ENCODE measurements at regions of chr14 and their contacts with region 1.

Region 1: GRCh38 chr14:105086833-105087307 is 21.6 kb upstream of the GPR132 start:
- DNase-seq: peak; percentile 89
- ATAC-seq: peak; percentile 86
- H3K4me3 ChIP-seq: peak overlapping the region in 4 of 5 experiments; percentile 55 to 67 (median 60)
- H3K4me3 Mint-ChIP-seq: peak overlapping the region; percentile 85
- H3K27ac ChIP-seq: peak overlapping the region in 1 of 2 donors; percentile 26
- H3K27ac Mint-ChIP-seq: peak overlapping the region; percentile 37
- H3K4me1 ChIP-seq: peaks cover 9 to 17% of the 10 kb centered on the region in 2 donors
- H3K4me1 Mint-ChIP-seq: peaks cover 16% of the 10 kb centered on the region
- H3K27me3 ChIP-seq: peaks cover 0 to 30% (median 9%) of the 10 kb centered on the region in 4 experiments
- H3K27me3 Mint-ChIP-seq: peaks cover 16% of the 10 kb centered on the region
- CTCF ChIP-seq: peak; percentile 78

Region 2: GRCh38 chr14:104895786-104896661 is 190.8 kb before region 1 on chr14:
- CTCF ChIA-PET with region 1: no interaction called
- POLR2A ChIA-PET with region 1: interaction called, 3 read pairs
- intact Hi-C with region 1: loop called (anchors 1 kb)
- DNase-seq: peak; percentile 18
- ATAC-seq: no peak
- H3K4me3 ChIP-seq: no peak overlapping the region
- H3K4me3 Mint-ChIP-seq: no peak overlapping the region
- H3K27ac ChIP-seq: no peak overlapping the region
- H3K27ac Mint-ChIP-seq: no peak overlapping the region
- H3K4me1 ChIP-seq: peaks cover 0 to 5% of the 10 kb centered on the region in 2 donors
- H3K4me1 Mint-ChIP-seq: peaks cover 4% of the 10 kb centered on the region
- H3K27me3 ChIP-seq: peaks cover 0 to 4% (median 0%) of the 10 kb centered on the region in 4 experiments
- H3K27me3 Mint-ChIP-seq: peaks cover 5% of the 10 kb centered on the region
- CTCF ChIP-seq: no peak

Region 3: DNA sequence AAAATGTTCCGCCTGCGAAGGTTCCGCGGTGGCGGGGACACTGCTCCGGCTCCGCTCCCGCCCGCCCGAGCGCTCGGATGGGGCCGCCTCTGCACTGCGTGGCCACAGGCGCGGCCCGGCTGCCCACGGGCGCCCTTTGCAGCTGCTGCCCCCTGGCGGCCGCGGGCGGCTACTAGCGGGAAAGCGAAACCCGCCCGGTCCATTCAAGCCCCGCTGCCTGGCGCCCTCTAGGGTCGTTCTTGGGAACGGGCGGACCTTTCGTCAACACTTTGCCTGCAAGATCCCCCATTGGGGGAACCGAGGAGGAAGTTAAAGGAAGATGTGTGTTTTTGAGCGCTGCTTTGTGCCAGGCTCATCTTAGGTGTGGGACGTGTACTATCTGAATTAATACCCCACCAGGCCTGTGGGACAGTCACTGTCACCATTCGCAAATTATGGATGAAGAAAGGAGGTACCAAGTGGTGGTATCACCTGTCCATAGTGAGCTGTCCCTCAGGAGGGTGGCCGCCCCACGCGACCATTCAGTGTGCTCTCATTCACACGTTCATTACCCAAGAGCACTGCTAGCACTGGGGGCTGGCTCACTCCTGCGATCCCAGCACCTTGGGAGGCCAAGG is 41.1 kb before region 1 on chr14:
- CTCF ChIA-PET with region 1: interaction called, 46 read pairs
- POLR2A ChIA-PET with region 1: interaction called, 6 read pairs
- intact Hi-C with region 1: loop called (anchors 1 kb)
- DNase-seq: peak; percentile 95
- ATAC-seq: peak; percentile 94
- H3K4me3 ChIP-seq: no peak overlapping the region
- H3K4me3 Mint-ChIP-seq: peak overlapping the region; percentile 1
- H3K27ac ChIP-seq: peak overlapping the region; percentile 11 to 24
- H3K27ac Mint-ChIP-seq: peak overlapping the region; percentile 28
- H3K4me1 ChIP-seq: peaks cover 5 to 18% of the 10 kb centered on the region in 2 donors
- H3K4me1 Mint-ChIP-seq: peaks cover 10% of the 10 kb centered on the region
- H3K27me3 ChIP-seq: peaks cover 0 to 9% (median 0%) of the 10 kb centered on the region in 4 experiments
- H3K27me3 Mint-ChIP-seq: no peaks in the 10 kb centered on the region
- CTCF ChIP-seq: peak; percentile 100

Region 4: DNA sequence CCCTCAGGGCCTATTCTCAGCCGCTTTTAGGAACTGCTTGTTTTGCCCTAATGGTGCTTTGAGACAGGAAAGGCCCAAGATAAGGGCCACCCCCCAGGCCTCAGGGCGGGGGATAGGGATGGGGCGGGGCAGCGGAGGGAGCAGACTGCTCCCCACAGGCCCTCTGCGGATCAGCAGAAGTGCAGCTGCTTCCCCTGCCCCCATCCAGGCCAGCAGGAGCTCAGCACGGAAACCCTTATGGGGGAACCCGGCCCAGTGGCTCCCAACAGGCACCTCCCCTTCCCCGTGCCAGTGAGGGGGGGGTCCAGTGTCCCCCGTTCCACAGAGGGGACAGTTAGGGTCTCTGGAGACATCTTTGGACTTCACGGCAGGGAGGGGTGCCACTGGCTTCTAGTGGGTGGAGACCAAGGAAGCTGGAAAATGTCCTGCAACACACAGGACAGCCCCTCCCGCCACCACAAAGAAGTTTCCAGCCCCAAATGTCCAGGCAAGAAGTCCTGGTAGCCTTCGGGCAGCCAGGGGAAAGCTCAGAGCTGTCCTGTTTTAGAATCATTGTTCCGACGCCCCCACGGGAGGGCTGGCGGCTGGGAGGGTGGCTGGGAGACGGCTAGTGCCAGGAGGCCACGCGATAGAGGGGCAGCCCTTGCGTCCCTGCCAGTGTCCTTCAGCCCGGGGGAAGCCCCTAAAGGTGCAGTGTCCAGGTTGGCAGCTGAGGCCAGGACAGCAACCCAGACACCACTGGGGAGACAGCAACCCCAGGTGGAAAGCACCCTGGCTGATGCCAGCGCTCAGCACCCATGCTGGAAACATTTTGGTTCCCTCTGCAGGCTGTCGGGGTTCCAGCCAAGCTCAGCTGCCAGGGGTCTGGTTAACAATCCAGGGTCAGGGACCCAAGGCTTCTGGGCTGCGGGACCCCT is 11.2 kb before region 1 on chr14:
- CTCF ChIA-PET with region 1: interaction called, 97 read pairs
- POLR2A ChIA-PET with region 1: interaction called, 9 read pairs
- intact Hi-C with region 1: no loop called
- DNase-seq: peak; percentile 75
- ATAC-seq: peak; percentile 80
- H3K4me3 ChIP-seq: peak overlapping the region in 3 of 5 experiments; percentile 4 to 25 (median 17)
- H3K4me3 Mint-ChIP-seq: peak overlapping the region; percentile 16
- H3K27ac ChIP-seq: no peak overlapping the region
- H3K27ac Mint-ChIP-seq: peak overlapping the region; percentile 59
- H3K4me1 ChIP-seq: peaks cover 39 to 47% of the 10 kb centered on the region in 2 donors
- H3K4me1 Mint-ChIP-seq: peaks cover 40% of the 10 kb centered on the region
- H3K27me3 ChIP-seq: no peaks in the 10 kb centered on the region
- H3K27me3 Mint-ChIP-seq: no peaks in the 10 kb centered on the region
- CTCF ChIP-seq: no peak

Region 5: DNA sequence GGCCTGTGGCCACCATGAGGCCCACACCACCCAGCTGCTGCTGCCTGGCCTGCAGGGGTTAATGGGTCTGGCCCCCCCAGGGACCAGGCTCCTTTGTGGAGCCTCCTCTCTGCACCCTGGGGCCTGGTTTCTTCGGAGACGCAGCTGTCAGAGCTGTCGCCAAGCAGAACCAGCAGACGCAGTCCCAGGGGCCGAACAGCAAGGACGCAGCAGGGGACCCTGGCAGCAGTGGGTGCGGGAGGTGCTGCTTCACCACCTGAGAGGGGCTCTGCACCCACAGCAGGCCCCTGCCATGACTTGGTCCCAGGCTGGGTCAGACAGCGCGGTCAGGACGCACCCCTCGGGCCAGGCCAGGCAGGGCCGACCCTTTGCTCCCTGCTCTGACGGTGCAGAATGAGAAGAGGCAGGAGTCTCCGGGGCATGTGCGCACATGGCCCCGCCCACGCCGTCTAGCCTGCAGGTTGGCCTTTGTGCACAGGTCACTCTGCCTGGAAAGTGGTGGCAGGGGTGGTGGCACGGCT is 51.2 kb after region 1 on chr14:
- CTCF ChIA-PET with region 1: no interaction called
- POLR2A ChIA-PET with region 1: no interaction called
- intact Hi-C with region 1: no loop called
- DNase-seq: no peak
- ATAC-seq: no peak
- H3K4me3 ChIP-seq: no peak overlapping the region
- H3K4me3 Mint-ChIP-seq: no peak overlapping the region
- H3K27ac ChIP-seq: no peak overlapping the region
- H3K27ac Mint-ChIP-seq: no peak overlapping the region
- H3K4me1 ChIP-seq: no peaks in the 10 kb centered on the region
- H3K4me1 Mint-ChIP-seq: no peaks in the 10 kb centered on the region
- H3K27me3 ChIP-seq: peaks cover 0 to 3% (median 0%) of the 10 kb centered on the region in 4 experiments
- H3K27me3 Mint-ChIP-seq: peaks cover 4% of the 10 kb centered on the region
- CTCF ChIP-seq: no peak

Region 6: GRCh38 chr14:105300792-105301533 is 214.1 kb after region 1 on chr14 and contains the start of gene BRF1:
- CTCF ChIA-PET with region 1: no interaction called
- POLR2A ChIA-PET with region 1: no interaction called
- intact Hi-C with region 1: loop called (anchors 2 kb)
- DNase-seq: peak; percentile 99
- ATAC-seq: peak; percentile 85
- H3K4me3 ChIP-seq: peak within 1 kb of the TSS; percentile 55 to 78 (median 67)
- H3K4me3 Mint-ChIP-seq: peak within 1 kb of the TSS; percentile 92
- H3K27ac ChIP-seq: peak within 1 kb of the TSS; percentile 82 to 85
- H3K27ac Mint-ChIP-seq: peak within 1 kb of the TSS; percentile 96
- H3K4me1 ChIP-seq: peaks cover 15 to 22% of the 10 kb centered on the region in 2 donors
- H3K4me1 Mint-ChIP-seq: peaks cover 20% of the 10 kb centered on the region
- H3K27me3 ChIP-seq: no peaks in the 10 kb centered on the region
- H3K27me3 Mint-ChIP-seq: no peaks in the 10 kb centered on the region
- CTCF ChIP-seq: no peak
- total RNA-seq, gene BRF1: 55.8 and 61.5 TPM in 2 replicates

Region 7: DNA sequence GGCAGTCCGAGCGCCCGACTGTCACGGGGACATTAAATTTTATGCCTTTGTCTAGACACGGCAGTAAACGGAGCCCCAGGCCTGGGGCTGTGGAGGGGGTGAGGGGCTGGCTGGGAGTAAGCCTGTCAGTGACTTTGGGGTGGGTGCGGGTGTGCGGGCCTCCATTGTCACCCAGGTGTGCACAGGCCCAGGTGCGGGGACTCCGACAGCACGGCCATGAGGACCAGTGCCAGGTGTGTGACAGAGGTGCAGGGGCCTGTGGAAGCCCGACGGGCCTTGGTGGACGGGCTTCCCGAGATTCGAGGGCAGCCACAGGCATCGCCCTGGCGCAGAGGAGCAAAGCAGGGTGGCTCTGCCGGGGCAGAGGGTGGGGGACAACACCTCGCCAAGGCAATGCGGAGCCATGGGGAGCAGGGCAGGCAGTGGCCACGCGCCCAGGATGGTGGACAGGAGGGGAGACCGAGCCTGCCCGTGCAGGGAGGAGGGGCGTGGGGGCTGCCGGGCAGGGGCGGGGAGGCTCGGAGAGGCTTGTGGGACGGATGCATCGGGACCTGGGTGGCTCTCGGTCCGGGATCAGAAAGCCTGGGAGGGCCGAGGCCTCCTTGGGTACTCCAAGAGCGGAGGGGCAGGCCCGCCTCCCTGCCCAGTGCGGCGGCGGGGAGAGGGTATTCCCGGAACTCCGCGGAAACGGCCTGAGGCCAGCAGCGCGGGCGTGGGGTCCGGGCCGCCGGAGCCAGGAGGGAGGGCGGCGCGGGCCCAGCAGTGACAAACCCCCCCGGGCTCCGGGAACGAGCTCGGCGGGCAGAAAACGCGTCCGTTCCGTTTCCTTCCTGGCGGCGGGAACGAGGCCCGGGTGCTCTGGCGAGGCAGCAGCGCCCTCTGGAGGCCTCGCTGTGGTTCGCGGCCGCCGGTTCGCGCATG is 441.1 kb after region 1 on chr14:
- CTCF ChIA-PET with region 1: interaction called, 7 read pairs
- POLR2A ChIA-PET with region 1: no interaction called
- intact Hi-C with region 1: loop called (anchors 2 kb)
- DNase-seq: peak; percentile 89
- ATAC-seq: peak; percentile 50
- H3K4me3 ChIP-seq: peak overlapping the region in 4 of 5 experiments; percentile 37 to 66 (median 60)
- H3K4me3 Mint-ChIP-seq: peak overlapping the region; percentile 80
- H3K27ac ChIP-seq: peak overlapping the region in 1 of 2 donors; percentile 30
- H3K27ac Mint-ChIP-seq: no peak overlapping the region
- H3K4me1 ChIP-seq: peaks cover 58 to 64% of the 10 kb centered on the region in 2 donors
- H3K4me1 Mint-ChIP-seq: peaks cover 49% of the 10 kb centered on the region
- H3K27me3 ChIP-seq: peaks cover 0 to 48% (median 9%) of the 10 kb centered on the region in 4 experiments
- H3K27me3 Mint-ChIP-seq: no peaks in the 10 kb centered on the region
- CTCF ChIP-seq: peak; percentile 85